ENCODE measurements at regions of chr6 and their contacts with region 1.

Region 1: DNA sequence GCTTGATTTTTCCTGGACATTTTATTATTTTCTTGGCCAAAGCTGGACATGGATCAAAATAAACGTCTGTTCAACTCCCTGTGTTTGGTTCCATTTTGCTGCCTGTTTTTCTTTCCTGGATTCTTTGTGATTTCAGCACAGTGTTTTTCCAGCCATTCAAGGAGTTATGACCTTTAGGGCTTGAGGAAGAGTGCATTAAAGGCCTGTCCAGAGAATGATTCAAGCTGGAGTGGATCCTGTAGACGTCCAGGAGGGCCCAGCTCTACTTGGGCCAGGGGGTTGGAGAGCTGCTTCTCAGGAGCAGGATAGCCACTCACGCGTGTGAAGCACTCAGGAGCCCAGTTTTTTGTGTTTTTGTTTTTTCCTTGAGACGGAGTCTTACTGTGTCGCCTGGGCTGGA is 56.5 kb upstream of the IER3 start:
- DNase-seq: no peak
- H3K4me3 ChIP-seq: no peak overlapping the region
- CTCF ChIP-seq: no peak

Region 2: GRCh38 chr6:30748851-30749558 is 51.9 kb before region 1 on chr6:
- in situ Hi-C with region 1: loop called (anchors 5 kb)
- DNase-seq: no peak
- H3K4me3 ChIP-seq: no peak overlapping the region
- CTCF ChIP-seq: no peak